ENCODE measurements at regions of chr11 and their contacts with region 1.

Region 1: DNA sequence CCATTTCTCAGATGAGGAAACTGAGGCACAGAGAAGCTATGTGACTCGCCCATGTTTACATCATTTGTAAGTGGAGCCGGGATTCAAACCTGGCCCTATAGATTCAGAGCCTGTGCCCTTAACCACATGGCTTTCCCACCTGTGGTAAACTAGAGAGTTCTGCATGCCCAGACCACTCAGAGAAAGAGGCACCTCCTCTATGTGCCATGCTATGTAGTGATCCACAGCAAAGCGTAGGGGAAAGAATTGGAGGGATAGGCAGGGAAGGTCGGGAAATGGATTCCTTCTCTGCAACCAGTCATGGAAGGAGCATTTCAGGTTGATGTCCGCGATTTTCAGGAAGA is 15.4 kb upstream of the POU2AF2 start:
- DNase-seq: no peak
- ATAC-seq: peak; percentile 87
- H3K4me3 ChIP-seq: peak overlapping the region; percentile 48 to 81
- H3K27ac ChIP-seq: no peak overlapping the region
- H3K4me1 ChIP-seq: no peaks in the 10 kb centered on the region
- H3K27me3 ChIP-seq: peaks cover 14% of the 10 kb centered on the region
- CTCF ChIP-seq: no peak

Region 2: GRCh38 chr11:110463153-110463552 is 766.9 kb before region 1 on chr11:
- CTCF ChIA-PET with region 1: interaction called, 3 read pairs
- POLR2A ChIA-PET with region 1: no interaction called
- in situ Hi-C with region 1: no loop called
- intact Hi-C with region 1: loop called (anchors 5 kb)
- DNase-seq: no peak
- ATAC-seq: peak; percentile 96
- H3K4me3 ChIP-seq: no peak overlapping the region
- H3K27ac ChIP-seq: no peak overlapping the region
- H3K4me1 ChIP-seq: no peaks in the 10 kb centered on the region
- H3K27me3 ChIP-seq: no peaks in the 10 kb centered on the region
- CTCF ChIP-seq: peak; percentile 74

Region 3: GRCh38 chr11:110711776-110712658 is 518.1 kb before region 1 on chr11 and contains the start of gene ARHGAP20:
- CTCF ChIA-PET with region 1: no interaction called
- POLR2A ChIA-PET with region 1: no interaction called
- in situ Hi-C with region 1: no loop called
- intact Hi-C with region 1: loop called (anchors 10 kb)
- DNase-seq: no peak
- ATAC-seq: peak; percentile 92
- H3K4me3 ChIP-seq: peak within 1 kb of the TSS; percentile 40 to 46
- H3K27ac ChIP-seq: no peak within 1 kb of the TSS
- H3K4me1 ChIP-seq: peaks cover 11% of the 10 kb centered on the region; the same call in 1 of the 2 replicates
- H3K27me3 ChIP-seq: peaks cover 61% of the 10 kb centered on the region
- CTCF ChIP-seq: no peak
- total RNA-seq, gene ARHGAP20: 0.05 TPM

Region 4: DNA sequence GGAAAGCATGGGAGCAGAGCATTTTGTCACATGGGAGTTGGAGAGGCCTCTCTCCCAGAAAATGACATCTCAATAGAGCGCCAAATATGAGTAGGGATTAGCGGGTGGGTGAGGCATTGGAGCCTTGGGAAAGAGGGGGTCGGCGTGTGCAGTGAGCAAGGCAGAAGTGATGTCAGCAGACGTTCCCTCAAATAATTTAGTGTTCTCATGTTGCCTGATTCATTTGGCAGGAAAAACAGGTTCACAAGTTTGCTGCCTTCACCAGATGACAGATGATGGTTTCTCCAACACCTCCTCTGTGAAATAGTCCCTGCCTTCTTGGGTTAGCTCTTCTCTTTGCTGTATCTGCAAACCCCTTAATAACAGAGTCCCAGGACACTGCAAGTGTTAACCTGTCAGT is 399.3 kb before region 1 on chr11:
- CTCF ChIA-PET with region 1: no interaction called
- POLR2A ChIA-PET with region 1: no interaction called
- in situ Hi-C with region 1: no loop called
- intact Hi-C with region 1: no loop called
- DNase-seq: no peak
- ATAC-seq: no peak
- H3K4me3 ChIP-seq: no peak overlapping the region
- H3K27ac ChIP-seq: no peak overlapping the region
- H3K4me1 ChIP-seq: no peaks in the 10 kb centered on the region
- H3K27me3 ChIP-seq: peaks cover 5% of the 10 kb centered on the region; the same call in 1 of the 2 replicates
- CTCF ChIP-seq: no peak

Region 5: GRCh38 chr11:110972640-110973039 is 257.5 kb before region 1 on chr11:
- CTCF ChIA-PET with region 1: no interaction called
- POLR2A ChIA-PET with region 1: no interaction called
- in situ Hi-C with region 1: no loop called
- intact Hi-C with region 1: no loop called
- DNase-seq: no peak
- ATAC-seq: no peak
- H3K4me3 ChIP-seq: no peak overlapping the region
- H3K27ac ChIP-seq: no peak overlapping the region
- H3K4me1 ChIP-seq: no peaks in the 10 kb centered on the region
- H3K27me3 ChIP-seq: no peaks in the 10 kb centered on the region
- CTCF ChIP-seq: no peak

Region 6: GRCh38 chr11:111081021-111081511 is 149.0 kb before region 1 on chr11:
- CTCF ChIA-PET with region 1: no interaction called
- POLR2A ChIA-PET with region 1: no interaction called
- in situ Hi-C with region 1: no loop called
- intact Hi-C with region 1: no loop called
- DNase-seq: no peak
- ATAC-seq: no peak
- H3K4me3 ChIP-seq: no peak overlapping the region
- H3K27ac ChIP-seq: no peak overlapping the region
- H3K4me1 ChIP-seq: no peaks in the 10 kb centered on the region
- H3K27me3 ChIP-seq: no peaks in the 10 kb centered on the region
- CTCF ChIP-seq: no peak

Region 7: DNA sequence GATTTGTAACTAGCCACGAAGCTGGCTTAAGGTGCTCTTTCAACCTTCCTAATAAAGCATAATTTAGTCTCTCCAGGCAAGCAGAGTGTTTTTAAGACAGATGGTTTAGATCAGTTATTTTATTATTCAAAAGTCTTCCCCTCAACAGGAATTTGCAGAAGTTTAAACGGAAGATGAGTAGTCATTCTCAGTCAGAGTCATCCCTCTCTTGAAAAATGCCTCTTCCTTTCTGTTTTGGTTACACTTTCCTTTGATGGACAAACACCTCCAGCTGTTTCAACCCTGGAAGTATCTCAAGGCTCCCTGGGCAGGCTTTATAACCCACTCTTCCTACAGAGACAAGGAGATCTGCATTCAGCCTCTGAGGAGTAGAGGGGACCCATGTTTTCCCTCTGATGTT is 44.8 kb before region 1 on chr11:
- CTCF ChIA-PET with region 1: no interaction called
- POLR2A ChIA-PET with region 1: interaction called, 14 read pairs
- in situ Hi-C with region 1: no loop called
- intact Hi-C with region 1: no loop called
- DNase-seq: no peak
- ATAC-seq: no peak
- H3K4me3 ChIP-seq: no peak overlapping the region
- H3K27ac ChIP-seq: no peak overlapping the region
- H3K4me1 ChIP-seq: no peaks in the 10 kb centered on the region
- H3K27me3 ChIP-seq: no peaks in the 10 kb centered on the region
- CTCF ChIP-seq: no peak

Region 8: DNA sequence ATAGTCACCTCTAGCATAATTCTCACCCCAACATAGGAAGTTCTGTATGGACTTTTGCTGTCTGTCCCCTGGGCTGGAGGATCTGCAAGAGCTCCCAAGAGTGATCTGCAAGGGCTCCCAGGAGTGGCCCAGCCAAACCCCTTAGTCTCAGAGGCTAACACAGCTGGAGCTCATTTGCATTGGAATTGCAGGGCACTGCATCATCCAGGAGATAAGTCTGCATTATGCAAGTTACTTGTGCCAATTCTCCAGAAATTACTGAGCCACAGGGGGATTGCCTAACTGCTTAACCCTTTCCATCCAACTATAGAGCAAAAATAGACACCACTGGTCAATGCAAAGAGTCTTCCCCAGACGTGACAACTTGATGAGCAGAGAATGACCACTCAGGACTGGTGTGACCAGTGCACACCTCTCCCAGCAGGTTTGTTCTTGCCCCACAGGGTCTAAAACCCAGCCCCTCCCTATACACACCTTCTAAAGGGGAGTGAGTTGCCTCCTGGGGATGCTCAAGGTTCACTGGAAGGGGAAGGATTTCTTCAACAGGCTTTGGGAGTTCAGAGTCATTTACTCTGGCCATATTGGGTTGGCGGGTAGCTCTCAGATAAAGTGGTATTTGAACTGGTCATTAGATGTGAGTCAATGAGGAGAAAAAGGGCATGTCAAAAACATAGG is 106.6 kb after region 1 on chr11:
- CTCF ChIA-PET with region 1: no interaction called
- POLR2A ChIA-PET with region 1: no interaction called
- in situ Hi-C with region 1: no loop called
- intact Hi-C with region 1: no loop called
- DNase-seq: no peak
- ATAC-seq: no peak
- H3K4me3 ChIP-seq: no peak overlapping the region
- H3K27ac ChIP-seq: no peak overlapping the region
- H3K4me1 ChIP-seq: no peaks in the 10 kb centered on the region
- H3K27me3 ChIP-seq: no peaks in the 10 kb centered on the region; the same call in none of the 2 replicates
- CTCF ChIP-seq: no peak